ENCODE measurements at regions of chr9 and their contacts with region 1.

Region 1: GRCh38 chr9:100598641-100599145 is 20.8 kb downstream of the CAVIN4 start:
- DNase-seq: peak; percentile 97
- ATAC-seq: peak; percentile 92
- H3K4me3 Mint-ChIP-seq: peak overlapping the region; percentile 64
- H3K27ac Mint-ChIP-seq: peak overlapping the region; percentile 93
- H3K4me1 Mint-ChIP-seq: peaks cover 51% of the 10 kb centered on the region
- H3K27me3 Mint-ChIP-seq: no peaks in the 10 kb centered on the region; the same call in 1 of the 2 replicates
- CTCF ChIP-seq: no peak

Region 2: DNA sequence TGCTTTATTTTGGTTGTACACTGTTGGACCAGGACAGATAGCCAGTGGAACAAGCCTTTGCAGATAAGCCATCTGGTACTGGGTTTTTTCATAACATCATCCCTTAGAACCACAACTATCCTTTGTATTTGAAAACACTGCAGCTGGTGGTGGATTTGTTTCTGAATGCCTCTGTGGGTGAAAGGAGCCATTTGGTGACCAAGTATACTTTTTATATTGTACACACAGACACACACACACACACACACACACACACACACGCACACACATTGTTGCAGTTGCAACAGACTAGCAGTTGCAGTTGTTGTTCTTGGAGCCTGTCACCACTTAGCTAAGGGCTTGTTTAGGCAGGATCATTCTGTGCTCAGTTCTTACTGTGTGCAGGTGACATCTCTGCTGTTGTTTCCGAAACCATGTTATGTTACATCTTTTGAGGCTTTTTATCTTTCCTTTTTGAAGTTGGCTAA is 43.7 kb before region 1 on chr9:
- CTCF ChIA-PET with region 1: no interaction called
- POLR2A ChIA-PET with region 1: no interaction called
- DNase-seq: no peak
- ATAC-seq: no peak
- H3K4me3 Mint-ChIP-seq: no peak overlapping the region
- H3K27ac Mint-ChIP-seq: no peak overlapping the region
- H3K4me1 Mint-ChIP-seq: no peaks in the 10 kb centered on the region
- H3K27me3 Mint-ChIP-seq: no peaks in the 10 kb centered on the region
- CTCF ChIP-seq: no peak

Region 3: DNA sequence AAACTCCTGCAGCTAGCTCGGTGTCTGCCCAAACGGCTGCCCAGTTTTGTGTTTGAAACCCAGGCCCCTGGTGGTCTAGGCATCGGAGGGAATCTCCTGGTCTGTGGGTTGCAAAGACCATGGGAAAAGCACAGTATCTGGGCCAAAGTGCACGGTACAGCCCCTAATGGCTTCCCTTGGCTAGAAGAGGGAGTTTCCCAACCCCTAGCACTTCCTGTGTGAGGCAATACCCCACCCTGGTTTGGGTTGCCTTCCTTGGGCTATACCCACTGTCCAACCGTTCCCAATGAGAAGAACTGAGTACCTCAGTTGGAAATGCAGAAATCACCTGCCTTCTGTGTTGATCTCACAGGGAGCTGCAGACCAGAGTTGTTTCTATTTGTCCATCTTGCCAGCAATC is 21.0 kb after region 1 on chr9:
- CTCF ChIA-PET with region 1: interaction called, 12 read pairs
- POLR2A ChIA-PET with region 1: no interaction called
- DNase-seq: no peak
- ATAC-seq: no peak
- H3K4me3 Mint-ChIP-seq: no peak overlapping the region
- H3K27ac Mint-ChIP-seq: no peak overlapping the region
- H3K4me1 Mint-ChIP-seq: no peaks in the 10 kb centered on the region
- H3K27me3 Mint-ChIP-seq: no peaks in the 10 kb centered on the region
- CTCF ChIP-seq: no peak

Region 4: GRCh38 chr9:100637787-100638186 is 39.1 kb after region 1 on chr9:
- CTCF ChIA-PET with region 1: interaction called, 25 read pairs
- POLR2A ChIA-PET with region 1: interaction called, 3 read pairs
- DNase-seq: peak; percentile 88
- ATAC-seq: peak; percentile 88
- H3K4me3 Mint-ChIP-seq: peak overlapping the region; percentile 22; the same call in 1 of the 2 replicates
- H3K27ac Mint-ChIP-seq: 0 out of 2 replicates have a peak overlapping the region, but pooled peaks have one; percentile 32
- H3K4me1 Mint-ChIP-seq: peaks cover 34% of the 10 kb centered on the region
- H3K27me3 Mint-ChIP-seq: peaks cover 3% of the 10 kb centered on the region; the same call in 1 of the 2 replicates
- CTCF ChIP-seq: no peak; the same call in 1 of the 2 replicates

Region 5: DNA sequence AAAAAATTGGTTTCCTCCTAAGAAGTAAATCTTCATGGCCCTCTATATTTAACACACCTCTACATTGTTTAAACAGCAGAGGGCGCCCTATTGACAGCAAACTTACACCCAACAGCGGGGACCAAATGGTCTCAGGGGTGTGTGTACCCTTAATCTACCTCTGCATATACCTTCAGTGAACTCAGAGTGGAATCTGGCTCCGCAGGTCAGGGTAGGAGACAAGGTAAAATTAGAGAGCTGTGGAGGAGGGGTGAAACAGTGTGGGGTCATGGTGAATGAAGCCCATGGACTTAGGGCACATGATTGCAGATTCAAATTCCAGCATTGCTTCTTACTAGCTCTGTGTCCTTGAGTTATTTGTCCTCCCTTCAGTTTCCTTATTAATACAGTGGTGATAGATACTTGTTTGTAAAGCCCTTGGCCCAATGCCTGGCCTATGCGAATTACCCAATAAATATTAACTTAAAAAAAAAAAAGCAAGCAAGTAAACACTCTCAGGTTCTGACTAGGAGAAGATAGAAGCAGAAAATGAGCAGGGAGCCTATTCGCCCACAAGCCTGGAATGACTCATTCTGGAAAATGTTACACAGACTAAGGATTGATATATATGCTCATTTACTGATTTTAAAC is 102.1 kb after region 1 on chr9:
- CTCF ChIA-PET with region 1: interaction called, 28 read pairs
- POLR2A ChIA-PET with region 1: no interaction called
- DNase-seq: peak; percentile 44
- ATAC-seq: peak; percentile 96
- H3K4me3 Mint-ChIP-seq: no peak overlapping the region
- H3K27ac Mint-ChIP-seq: no peak overlapping the region
- H3K4me1 Mint-ChIP-seq: peaks cover 11% of the 10 kb centered on the region
- H3K27me3 Mint-ChIP-seq: no peaks in the 10 kb centered on the region
- CTCF ChIP-seq: peak; percentile 48

Region 6: GRCh38 chr9:100714372-100715099 is 115.8 kb after region 1 on chr9:
- CTCF ChIA-PET with region 1: interaction called, 15 read pairs
- POLR2A ChIA-PET with region 1: no interaction called
- DNase-seq: peak; percentile 83
- ATAC-seq: peak; percentile 97
- H3K4me3 Mint-ChIP-seq: no peak overlapping the region
- H3K27ac Mint-ChIP-seq: no peak overlapping the region
- H3K4me1 Mint-ChIP-seq: 0 out of 2 replicates have a peak, but pooled peaks cover 4% of the 10 kb centered on the region
- H3K27me3 Mint-ChIP-seq: no peaks in the 10 kb centered on the region
- CTCF ChIP-seq: peak; percentile 93

Region 7: DNA sequence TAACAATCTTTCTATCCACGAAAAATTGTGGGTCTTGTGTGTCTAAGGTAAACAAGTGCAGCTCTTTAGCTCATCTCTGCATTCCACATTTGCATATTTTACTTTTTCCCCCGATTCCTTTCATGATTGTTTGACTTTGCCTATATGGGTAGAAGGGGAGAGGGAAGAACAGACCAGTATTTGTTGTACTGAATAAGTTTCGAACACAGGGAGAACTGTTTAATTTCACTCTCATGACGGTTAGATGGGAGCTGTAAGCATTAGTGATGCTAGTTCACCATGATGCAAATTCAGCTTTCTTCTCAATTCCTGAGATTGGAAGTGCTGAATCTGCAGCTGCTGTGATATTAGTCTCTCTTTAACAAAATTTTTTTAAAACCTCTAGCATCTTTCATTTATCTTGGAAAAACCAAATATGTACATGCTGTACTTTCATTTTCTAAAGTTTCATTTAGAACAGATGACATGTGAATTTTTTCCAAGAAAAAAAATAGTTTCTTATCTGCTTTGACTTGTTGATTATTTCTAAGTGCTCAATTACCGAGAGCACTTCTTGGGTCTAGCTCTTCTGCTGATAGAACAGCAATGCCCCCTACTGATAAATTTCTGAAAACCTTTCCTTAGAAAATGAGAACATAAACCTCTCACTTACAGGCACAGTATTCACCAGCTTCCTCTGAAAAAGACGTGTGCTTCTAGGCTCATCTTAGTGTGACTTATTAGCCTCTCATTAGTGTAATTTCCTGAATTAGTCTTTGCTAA is 636.6 kb after region 1 on chr9:
- CTCF ChIA-PET with region 1: interaction called, 31 read pairs
- POLR2A ChIA-PET with region 1: no interaction called
- DNase-seq: no peak
- ATAC-seq: peak; percentile 89
- H3K4me3 Mint-ChIP-seq: no peak overlapping the region
- H3K27ac Mint-ChIP-seq: peak overlapping the region; percentile 35
- H3K4me1 Mint-ChIP-seq: peaks cover 47% of the 10 kb centered on the region
- H3K27me3 Mint-ChIP-seq: no peaks in the 10 kb centered on the region
- CTCF ChIP-seq: peak; percentile 32; the same call in 1 of the 2 replicates

Region 8: DNA sequence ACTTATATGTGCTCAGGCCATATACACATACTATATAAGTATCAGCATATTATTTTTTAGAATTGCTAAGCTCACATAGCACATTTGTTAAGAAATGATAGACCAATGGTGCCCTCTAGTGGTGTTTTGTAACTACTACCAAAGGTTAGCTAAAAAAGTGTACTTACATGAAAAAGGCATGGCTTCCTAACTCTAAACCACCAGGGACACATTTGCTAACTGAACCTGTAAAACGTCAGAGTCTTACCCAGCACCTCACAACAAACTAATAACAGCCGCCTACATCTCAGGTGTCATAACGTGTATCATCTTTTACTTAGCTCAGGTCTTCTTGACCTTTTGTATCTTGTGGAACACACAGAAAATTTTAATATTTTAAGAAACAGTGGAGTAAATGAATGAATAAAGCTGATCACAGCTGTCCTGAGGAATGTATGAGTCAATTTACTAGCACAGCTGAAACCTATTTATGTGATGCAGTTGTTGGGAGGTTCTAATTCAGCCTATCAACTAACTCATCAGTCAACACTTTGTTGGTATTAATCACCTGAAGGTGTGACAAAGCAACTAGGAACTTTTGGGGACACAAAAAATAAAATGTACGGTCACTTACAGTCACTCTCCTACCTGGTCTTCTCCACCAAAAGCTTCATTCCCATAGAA is 713.2 kb after region 1 on chr9:
- CTCF ChIA-PET with region 1: interaction called, 69 read pairs
- POLR2A ChIA-PET with region 1: no interaction called
- DNase-seq: no peak
- ATAC-seq: peak; percentile 78
- H3K4me3 Mint-ChIP-seq: no peak overlapping the region
- H3K27ac Mint-ChIP-seq: no peak overlapping the region
- H3K4me1 Mint-ChIP-seq: peaks cover 2% of the 10 kb centered on the region; the same call in 1 of the 2 replicates
- H3K27me3 Mint-ChIP-seq: no peaks in the 10 kb centered on the region; the same call in 1 of the 2 replicates
- CTCF ChIP-seq: peak; percentile 76

Measured in WTC11 (cell line).